ENCODE measurements at regions of chr19 and their contacts with region 1.

Region 1: DNA sequence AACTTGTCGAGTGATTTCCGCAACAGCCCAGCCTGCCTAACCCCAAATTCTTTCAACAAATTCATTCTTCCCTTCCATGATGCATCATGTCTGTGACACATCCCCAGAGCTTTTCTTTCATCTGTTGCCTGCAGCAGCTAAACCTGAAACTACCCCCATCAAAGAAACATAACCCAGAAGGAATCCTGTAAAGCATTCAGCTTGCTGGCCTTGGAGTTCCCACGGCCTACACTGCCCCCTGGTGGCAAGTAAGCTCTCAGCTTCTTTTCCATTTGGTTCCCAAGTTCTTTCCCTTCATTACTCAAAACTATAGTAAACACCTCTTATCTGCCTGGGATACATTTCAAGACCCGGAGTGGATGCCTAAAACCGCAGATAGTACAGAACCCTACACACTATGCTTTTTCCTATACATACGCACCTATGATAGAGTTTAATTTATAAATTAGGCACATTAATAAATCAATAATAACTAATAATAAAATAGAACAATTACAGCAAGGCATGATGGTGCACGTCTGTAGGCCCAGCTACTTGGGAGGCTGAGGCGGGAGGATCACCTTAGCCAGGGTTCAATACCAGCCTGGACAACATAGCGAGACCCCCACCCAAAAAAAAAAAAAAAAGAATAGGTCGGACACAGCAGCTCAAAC is 7.4 kb downstream of the ETHE1 start:
- DNase-seq: peak; percentile 74
- CTCF ChIP-seq: peak; percentile 86

Region 2: DNA sequence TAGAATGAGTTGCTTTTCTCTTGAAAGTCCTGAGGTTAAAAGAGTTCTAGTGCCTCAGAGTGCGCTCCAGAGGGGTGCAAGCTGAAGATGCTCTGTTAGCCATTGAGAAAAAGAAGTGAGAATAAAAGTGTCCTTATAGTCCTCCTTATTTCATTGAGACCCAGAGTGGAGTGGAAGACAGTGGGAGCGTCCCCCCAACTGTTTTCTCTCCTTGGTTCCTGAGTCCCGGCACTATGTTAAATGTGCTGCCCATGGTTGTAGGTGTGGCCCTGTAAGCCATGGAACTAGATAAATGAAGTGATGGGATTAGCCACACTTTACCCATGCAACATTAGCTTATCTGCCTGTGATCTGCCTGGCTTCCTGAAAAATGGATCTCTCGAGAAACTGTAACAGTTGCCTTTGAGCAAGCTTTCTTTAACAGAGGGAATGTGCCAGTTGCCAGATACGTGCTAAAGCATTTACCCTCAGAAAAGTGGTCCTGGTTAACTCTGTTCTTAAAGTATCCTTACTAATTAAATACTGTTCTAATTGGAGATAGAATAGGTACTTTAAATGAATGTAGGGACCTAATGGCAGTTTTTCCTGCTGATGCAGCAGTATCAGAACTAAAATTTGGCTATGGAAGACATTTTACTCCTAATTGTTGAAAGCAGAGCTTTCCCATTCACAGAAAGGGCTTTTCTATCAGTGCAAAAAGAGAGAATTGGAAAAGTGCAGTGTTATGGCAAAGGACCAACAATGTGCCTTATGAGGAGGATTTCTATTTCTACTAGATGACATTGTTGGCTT is 228.8 kb before region 1 on chr19:
- in situ Hi-C with region 1: no loop called
- DNase-seq: no peak
- CTCF ChIP-seq: no peak

Region 3: GRCh38 chr19:43300876-43301765 is 218.4 kb before region 1 on chr19:
- in situ Hi-C with region 1: no loop called
- DNase-seq: no peak
- CTCF ChIP-seq: no peak

Region 4: GRCh38 chr19:43450545-43450997 is 69.0 kb before region 1 on chr19:
- in situ Hi-C with region 1: loop called (anchors 5 kb)
- DNase-seq: no peak
- CTCF ChIP-seq: no peak